ENCODE measurements at regions of chr11 and their contacts with region 1.

Region 1: GRCh38 chr11:68509066-68509465 is 48.5 kb downstream of the PPP6R3 start:
- DNase-seq: peak; percentile 9
- H3K4me3 ChIP-seq: no peak overlapping the region
- CTCF ChIP-seq: no peak

Region 2: GRCh38 chr11:68521969-68522652 is 13.0 kb after region 1 on chr11:
- CTCF ChIA-PET with region 1: interaction called, 10 read pairs
- POLR2A ChIA-PET with region 1: no interaction called
- DNase-seq: no peak
- H3K4me3 ChIP-seq: no peak overlapping the region
- CTCF ChIP-seq: no peak

Region 3: DNA sequence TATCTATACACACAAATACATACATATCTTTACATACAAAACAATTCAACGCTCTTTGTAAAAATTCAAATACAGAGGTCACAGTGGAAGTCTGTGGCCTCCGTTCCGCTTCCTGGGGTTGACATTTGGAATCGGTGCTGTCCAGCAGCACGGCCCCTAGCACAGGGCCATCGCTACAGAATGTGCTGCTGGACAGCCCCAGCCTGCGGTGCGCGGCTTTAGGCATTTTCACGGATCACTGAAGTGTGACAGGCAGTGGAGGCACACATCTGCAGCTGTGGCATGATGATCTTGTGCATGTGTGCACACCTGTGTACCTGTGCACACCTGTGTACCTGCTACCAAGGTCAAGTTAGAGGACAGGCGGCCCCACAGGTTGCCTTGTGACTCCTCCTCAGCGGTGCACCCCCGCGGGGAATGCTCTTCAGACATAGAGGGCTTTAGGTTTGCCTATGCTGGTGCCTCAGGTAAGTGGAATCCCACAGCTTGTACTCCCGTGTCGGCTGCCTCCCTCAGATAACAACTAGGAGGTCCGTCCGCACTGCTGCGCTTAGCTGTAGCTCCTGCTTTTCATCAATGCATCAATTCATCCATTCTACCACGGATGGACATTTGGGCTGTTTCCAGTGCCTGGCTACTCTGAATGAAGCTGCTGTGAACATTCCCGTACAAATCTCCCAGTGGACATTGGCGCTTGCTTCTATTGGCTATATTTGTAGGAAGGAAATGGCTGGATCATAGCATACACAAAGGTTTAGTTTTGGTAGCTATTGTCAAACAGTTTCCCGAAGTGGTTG is 205.2 kb after region 1 on chr11:
- CTCF ChIA-PET with region 1: no interaction called
- POLR2A ChIA-PET with region 1: no interaction called
- DNase-seq: no peak
- H3K4me3 ChIP-seq: no peak overlapping the region
- CTCF ChIP-seq: no peak